Activated T-helper 1 cell treated with anti-CD3 and anti-CD28 coated beads, Interleukin-12 subunit alpha, Interleukin-12 subunit beta, Interleukin-2, Interleukin-4 antibody, amounts not matched to agents 30 ng/mL and 10 ng/mL and 1 ng/mL, durations not matched to agents 14 hours and 24 hours and 36 hours (primary cell): ENCODE measurements at regions of chr1 and their contacts with region 1.

Region 1: DNA sequence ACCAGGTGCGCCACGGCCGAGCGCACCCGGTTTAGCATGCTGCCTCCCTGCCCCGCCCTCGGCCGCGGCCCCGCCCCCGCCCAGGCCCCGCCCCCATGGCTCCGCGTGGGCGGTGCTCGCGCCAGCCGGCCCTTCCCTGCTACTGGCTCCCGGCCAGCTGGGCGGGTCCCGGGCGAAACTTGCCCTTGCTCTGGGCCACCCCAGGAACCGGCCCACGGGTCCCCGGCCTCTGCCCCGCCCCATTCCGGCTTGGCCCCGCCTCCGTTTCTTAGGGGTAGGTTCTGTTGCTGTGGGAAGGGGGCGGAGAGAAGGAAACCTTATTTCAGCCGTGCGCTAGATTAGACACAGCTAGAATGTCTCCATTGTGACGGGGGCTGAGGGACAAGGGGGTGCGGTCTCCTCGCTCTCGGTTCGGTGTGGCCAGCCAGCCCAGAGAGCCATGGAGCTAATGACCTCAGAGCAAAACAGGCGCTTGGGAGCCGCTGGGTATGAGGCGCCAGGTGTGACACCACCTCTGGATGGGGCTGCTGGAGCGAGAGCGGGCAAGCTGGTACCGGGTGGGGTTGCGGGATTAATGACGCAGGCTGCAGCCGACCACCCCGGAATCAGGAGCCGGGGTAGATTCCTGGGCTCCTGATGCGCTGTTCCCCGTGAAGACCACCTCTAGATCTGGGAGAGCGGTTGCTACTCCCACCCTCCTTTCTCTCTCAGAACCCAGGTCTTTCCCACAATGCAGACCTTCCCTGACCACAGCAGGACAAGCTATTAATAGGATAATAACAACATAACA is at the start of gene PPM1J:
- DNase-seq: peak; percentile 99
- H3K4me3 Mint-ChIP-seq: peak within 1 kb of the TSS; percentile 86
- H3K27ac Mint-ChIP-seq: peak within 1 kb of the TSS; percentile 27
- H3K4me1 Mint-ChIP-seq: peaks cover 41% of the 10 kb centered on the region
- H3K27me3 Mint-ChIP-seq: peaks cover 29% of the 10 kb centered on the region
- total RNA-seq, gene PPM1J: 0.60 and 1.1 TPM in 2 replicates

Region 2: GRCh38 chr1:112074711-112075110 is 640.7 kb before region 1 on chr1:
- intact Hi-C with region 1: no loop called
- DNase-seq: no peak
- H3K4me3 Mint-ChIP-seq: no peak overlapping the region
- H3K27ac Mint-ChIP-seq: no peak overlapping the region
- H3K4me1 Mint-ChIP-seq: no peaks in the 10 kb centered on the region
- H3K27me3 Mint-ChIP-seq: no peaks in the 10 kb centered on the region

Region 3: GRCh38 chr1:112390775-112391602 is 324.5 kb before region 1 on chr1:
- intact Hi-C with region 1: loop called (anchors 1 kb)
- DNase-seq: peak; percentile 75
- H3K4me3 Mint-ChIP-seq: peak overlapping the region; percentile 70
- H3K27ac Mint-ChIP-seq: peak overlapping the region; percentile 15
- H3K4me1 Mint-ChIP-seq: peaks cover 37% of the 10 kb centered on the region
- H3K27me3 Mint-ChIP-seq: peaks cover 1% of the 10 kb centered on the region

Region 4: DNA sequence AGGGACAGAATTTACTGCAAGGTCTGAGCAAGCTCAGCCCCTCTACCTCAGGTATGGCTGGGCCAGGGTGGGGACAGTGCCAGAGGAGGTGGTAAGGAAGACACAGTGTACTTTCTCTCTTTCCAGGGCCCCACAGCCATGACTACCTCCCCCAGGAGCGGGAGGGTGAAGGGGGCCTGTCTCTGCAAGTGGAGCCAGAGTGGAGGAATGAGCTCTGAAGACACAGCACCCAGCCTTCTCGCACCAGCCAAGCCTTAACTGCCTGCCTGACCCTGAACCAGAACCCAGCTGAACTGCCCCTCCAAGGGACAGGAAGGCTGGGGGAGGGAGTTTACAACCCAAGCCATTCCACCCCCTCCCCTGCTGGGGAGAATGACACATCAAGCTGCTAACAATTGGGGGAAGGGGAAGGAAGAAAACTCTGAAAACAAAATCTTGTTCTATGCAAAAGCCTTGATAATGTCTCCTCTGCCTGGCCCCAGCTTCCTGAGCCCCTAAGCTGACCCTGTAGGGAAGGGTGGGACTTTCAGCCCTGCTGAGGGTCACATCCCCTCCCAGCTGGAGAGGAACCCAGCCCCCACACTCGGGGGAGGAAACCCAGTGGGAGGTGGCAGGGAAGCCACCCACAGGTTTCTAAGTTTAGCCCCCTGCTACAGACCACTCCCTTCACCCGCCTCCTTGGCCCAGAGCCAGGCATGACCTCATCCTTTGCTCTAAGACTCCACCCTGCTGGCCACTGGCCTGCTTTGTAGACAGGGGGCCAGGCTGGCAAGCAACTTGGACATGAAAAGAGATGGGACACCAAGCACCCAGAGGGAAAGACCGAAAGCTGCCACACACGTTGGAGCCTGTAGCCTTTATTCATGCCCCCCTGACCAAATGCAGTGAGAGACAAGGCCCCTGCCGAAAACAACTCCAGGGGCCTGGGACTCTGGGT is 14.9 kb before region 1 on chr1:
- intact Hi-C with region 1: loop called (anchors 2 kb)
- DNase-seq: peak; percentile 65
- H3K4me3 Mint-ChIP-seq: peak overlapping the region; percentile 57
- H3K27ac Mint-ChIP-seq: peak overlapping the region; percentile 92
- H3K4me1 Mint-ChIP-seq: peaks cover 64% of the 10 kb centered on the region
- H3K27me3 Mint-ChIP-seq: no peaks in the 10 kb centered on the region

Region 5: DNA sequence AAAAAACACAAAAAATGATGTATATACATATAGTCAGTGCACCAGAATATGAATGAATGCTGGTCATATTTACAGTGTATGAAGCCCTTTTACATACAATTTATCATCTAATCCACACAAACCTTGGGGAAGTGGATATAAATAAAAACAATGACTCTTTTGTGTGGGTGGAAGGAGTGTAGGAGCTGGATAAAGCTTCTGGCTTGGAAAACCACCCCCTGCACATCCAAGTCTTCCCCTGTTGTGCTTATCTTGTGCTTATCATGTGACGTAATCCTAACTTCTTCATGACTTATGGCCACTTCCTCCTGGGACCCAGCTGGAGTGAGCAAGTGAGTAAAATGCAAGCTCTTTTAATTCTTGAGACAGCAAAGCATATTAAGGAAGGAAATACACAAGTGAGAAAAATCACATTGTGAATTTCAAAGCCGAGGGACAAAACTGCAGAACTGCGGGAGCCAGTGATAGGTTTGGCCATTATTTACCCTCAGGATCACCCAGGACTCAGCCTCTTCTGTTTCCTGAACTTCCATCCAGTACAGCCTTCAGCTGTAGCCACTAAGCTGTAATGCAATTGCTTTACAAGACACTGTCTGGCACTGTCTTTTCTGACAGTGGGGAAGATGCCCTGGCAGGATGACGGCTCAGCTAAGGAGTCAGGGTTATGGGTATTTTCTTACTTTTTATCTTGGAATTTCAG is 103.7 kb after region 1 on chr1:
- intact Hi-C with region 1: no loop called
- DNase-seq: no peak
- H3K4me3 Mint-ChIP-seq: no peak overlapping the region
- H3K27ac Mint-ChIP-seq: no peak overlapping the region
- H3K4me1 Mint-ChIP-seq: no peaks in the 10 kb centered on the region
- H3K27me3 Mint-ChIP-seq: no peaks in the 10 kb centered on the region

Region 6: DNA sequence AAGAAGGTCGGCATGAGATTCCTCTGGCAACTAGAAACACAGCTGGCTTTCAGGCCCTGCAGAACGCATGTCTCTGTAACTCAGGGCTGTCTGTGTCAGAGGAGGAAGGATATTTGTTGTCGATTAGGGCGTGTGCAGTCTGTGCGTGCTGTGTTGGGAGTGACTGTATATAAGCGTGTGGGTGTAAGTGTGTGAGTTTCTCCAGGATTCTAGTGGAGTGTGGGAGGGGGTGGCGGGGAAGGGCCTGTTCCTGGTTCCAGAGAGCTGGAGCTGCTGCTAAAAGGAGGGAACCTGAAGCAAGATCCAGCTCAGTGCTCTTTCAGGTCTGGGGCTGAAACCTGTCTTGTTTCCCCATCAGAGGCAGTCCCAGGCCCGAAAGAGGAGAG is 166.3 kb after region 1 on chr1:
- intact Hi-C with region 1: loop called (anchors 1 kb)
- DNase-seq: no peak
- H3K4me3 Mint-ChIP-seq: no peak overlapping the region
- H3K27ac Mint-ChIP-seq: no peak overlapping the region
- H3K4me1 Mint-ChIP-seq: no peaks in the 10 kb centered on the region
- H3K27me3 Mint-ChIP-seq: peaks cover 18% of the 10 kb centered on the region

Region 7: DNA sequence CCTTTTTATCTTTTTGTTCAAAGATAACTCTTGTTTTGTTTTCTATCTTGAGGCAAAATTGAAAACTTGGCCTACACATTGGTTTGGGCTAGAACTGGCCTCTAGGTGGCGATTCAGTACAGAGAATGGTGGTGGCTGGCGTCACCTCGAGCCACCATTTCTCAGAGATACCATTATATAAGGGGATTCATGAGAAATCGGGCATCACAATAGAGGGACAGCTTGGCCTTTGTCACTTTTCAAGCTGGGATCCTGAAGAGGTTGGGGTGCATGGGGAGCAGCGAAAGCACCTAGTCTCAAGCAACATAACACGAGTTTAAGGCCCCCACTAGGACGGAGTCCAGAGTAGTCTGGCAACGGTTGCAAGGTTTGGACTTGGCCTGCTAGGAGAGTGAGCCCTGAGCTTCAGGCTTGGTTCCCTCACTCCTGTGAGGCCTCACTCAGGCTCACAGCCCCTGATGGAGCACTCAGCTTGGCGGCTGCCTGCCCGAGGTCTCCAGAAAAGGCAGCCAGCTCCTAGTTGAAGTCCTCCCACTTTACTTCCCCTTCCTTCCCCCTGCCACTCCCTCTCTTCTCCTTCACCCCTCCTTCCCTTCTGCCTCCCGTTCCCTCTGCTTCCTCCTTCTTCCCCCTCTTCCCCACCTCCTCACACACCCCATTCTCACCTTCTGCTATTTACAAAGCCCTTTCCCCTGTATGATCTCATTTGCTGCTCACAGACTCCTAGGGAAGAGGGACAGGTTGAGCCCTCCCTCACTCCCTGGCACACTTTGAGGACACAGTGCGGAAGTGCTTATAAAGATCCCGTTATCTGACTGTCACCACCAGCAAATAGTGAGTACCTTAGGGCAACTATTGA is 425.4 kb after region 1 on chr1:
- intact Hi-C with region 1: loop called (anchors 1 kb)
- DNase-seq: peak; percentile 24
- H3K4me3 Mint-ChIP-seq: no peak overlapping the region
- H3K27ac Mint-ChIP-seq: no peak overlapping the region
- H3K4me1 Mint-ChIP-seq: peaks cover 15% of the 10 kb centered on the region
- H3K27me3 Mint-ChIP-seq: no peaks in the 10 kb centered on the region

Region 8: DNA sequence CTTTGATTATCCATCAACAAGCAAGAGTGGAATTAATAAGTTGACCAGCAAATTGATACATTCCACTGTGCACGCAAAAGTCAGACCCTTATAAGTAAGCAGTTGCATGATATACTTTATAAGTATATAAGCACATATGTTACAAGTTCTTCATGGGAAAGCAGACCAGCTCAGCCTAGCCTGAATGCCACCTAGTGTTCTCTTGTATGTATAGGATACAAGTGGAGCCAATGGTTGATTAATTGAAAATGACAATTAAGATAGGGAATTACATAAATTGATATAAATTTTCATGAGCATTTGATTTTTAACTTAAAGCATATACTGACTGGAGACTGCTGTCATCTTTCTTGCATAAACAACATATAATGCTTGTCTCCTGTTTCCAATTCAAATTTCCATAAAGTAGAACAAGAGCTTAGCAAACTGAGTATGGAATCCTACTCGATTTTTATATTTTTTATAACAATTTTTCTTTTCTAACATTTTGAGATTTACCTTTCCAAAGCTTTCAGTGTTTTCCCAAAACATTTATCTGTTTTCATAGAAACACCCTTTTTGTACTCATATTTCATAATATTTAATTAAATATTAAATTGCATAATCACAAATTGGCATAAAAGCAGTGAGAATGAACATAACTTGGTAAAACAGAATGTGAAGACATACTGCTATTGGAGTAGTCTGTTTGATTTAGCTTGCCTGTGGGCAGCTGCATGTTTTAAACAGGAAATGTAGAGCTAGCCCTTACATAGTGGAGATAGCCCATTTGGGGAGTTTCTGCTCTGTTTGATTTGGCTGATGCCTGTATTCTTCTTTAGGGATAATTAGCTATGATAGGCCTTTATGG is 737.7 kb after region 1 on chr1:
- intact Hi-C with region 1: loop called (anchors 2 kb)
- DNase-seq: no peak
- H3K4me3 Mint-ChIP-seq: no peak overlapping the region
- H3K27ac Mint-ChIP-seq: no peak overlapping the region
- H3K4me1 Mint-ChIP-seq: no peaks in the 10 kb centered on the region
- H3K27me3 Mint-ChIP-seq: no peaks in the 10 kb centered on the region

Region 9: GRCh38 chr1:114346480-114347029 is 1631.1 kb after region 1 on chr1:
- intact Hi-C with region 1: loop called (anchors 5 kb)
- DNase-seq: peak; percentile 98
- H3K4me3 Mint-ChIP-seq: peak overlapping the region; percentile 93
- H3K27ac Mint-ChIP-seq: peak overlapping the region; percentile 91
- H3K4me1 Mint-ChIP-seq: peaks cover 26% of the 10 kb centered on the region
- H3K27me3 Mint-ChIP-seq: no peaks in the 10 kb centered on the region